Upper lobe of right lung (tissue), 1 donor: ENCODE measurements at regions of chr11 and their contacts with region 1.

Region 1: GRCh38 chr11:120172054-120172911 is 34.4 kb upstream of the TRIM29 start:
- DNase-seq: peak; percentile 73
- ATAC-seq: peak; percentile 70
- H3K4me3 ChIP-seq: no peak overlapping the region
- H3K27ac ChIP-seq: no peak overlapping the region
- H3K4me1 ChIP-seq: peaks cover 11% of the 10 kb centered on the region
- H3K27me3 ChIP-seq: peaks cover 28% of the 10 kb centered on the region
- CTCF ChIP-seq: peak; percentile 78

Region 2: DNA sequence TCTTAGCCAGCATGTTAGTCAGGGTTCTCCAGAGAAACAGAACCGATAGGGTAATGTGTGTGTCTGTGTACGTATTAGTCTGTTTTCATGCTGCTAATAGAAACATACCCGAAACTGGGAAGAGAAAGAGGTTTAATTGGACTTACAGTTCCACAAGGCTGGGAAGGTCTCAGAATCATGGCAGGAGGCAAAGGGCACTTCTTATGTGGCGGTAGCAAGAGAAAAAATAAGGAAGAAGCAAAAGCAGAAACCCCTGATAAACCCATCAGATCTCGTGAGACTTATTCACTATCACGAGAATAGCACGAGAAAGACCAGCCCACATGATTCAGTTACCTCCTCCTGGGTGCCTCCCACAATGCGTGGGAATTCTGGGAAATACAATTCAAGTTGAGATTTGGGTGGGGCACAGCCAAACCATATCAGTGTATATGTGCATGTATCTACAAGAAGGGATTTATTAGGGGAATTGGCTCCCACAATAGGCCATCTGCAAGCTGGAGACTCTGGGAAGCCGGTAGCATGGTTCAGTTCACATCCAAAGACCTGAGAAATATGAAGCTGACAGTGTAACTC is 269.5 kb before region 1 on chr11:
- intact Hi-C with region 1: no loop called
- DNase-seq: no peak
- ATAC-seq: no peak
- H3K4me3 ChIP-seq: no peak overlapping the region
- H3K27ac ChIP-seq: no peak overlapping the region
- H3K4me1 ChIP-seq: no peaks in the 10 kb centered on the region
- H3K27me3 ChIP-seq: no peaks in the 10 kb centered on the region
- CTCF ChIP-seq: no peak

Region 3: GRCh38 chr11:120229451-120230424 is 57.5 kb after region 1 on chr11:
- intact Hi-C with region 1: loop called (anchors 5 kb)
- DNase-seq: no peak
- ATAC-seq: no peak
- H3K4me3 ChIP-seq: no peak overlapping the region
- H3K27ac ChIP-seq: no peak overlapping the region
- H3K4me1 ChIP-seq: peaks cover 11% of the 10 kb centered on the region
- H3K27me3 ChIP-seq: peaks cover 18% of the 10 kb centered on the region
- CTCF ChIP-seq: peak; percentile 65

Region 4: DNA sequence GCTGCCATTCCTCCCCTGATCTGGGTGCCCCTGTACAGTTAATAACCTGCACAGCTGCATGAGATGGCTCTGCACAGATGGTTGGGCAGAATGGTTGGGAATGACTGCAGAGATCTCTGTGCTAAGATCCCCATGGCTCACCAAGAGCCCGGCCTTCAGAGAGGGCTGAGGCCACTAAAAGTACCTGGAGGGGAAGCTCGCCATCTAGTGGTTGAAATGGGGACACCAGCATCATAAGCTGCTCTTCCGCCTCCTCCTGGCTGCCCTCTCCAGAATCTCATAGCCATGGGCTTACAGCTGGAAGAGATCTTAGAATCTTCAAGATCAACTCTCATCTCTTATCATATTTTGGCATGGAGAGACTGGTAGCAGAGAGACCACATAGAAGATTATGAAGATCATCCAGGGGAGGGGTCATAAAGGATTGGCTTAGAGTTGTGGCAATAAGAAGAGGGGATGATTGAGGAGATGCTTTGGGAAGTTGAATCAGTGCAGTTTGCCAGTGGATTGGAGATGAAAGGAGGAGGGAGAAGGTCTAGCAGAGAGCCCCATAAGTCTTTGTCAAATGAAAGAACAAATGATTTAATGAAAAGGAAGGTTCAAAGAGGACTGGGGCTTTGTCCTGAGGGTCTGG is 130.8 kb after region 1 on chr11:
- intact Hi-C with region 1: loop called (anchors 10 kb)
- DNase-seq: no peak
- ATAC-seq: peak; percentile 72
- H3K4me3 ChIP-seq: no peak overlapping the region
- H3K27ac ChIP-seq: no peak overlapping the region
- H3K4me1 ChIP-seq: peaks cover 18% of the 10 kb centered on the region
- H3K27me3 ChIP-seq: no peaks in the 10 kb centered on the region
- CTCF ChIP-seq: peak; percentile 92